Ascending aorta (tissue), 2 donors: ENCODE measurements at regions of chr18 and their contacts with region 1.

Region 1: DNA sequence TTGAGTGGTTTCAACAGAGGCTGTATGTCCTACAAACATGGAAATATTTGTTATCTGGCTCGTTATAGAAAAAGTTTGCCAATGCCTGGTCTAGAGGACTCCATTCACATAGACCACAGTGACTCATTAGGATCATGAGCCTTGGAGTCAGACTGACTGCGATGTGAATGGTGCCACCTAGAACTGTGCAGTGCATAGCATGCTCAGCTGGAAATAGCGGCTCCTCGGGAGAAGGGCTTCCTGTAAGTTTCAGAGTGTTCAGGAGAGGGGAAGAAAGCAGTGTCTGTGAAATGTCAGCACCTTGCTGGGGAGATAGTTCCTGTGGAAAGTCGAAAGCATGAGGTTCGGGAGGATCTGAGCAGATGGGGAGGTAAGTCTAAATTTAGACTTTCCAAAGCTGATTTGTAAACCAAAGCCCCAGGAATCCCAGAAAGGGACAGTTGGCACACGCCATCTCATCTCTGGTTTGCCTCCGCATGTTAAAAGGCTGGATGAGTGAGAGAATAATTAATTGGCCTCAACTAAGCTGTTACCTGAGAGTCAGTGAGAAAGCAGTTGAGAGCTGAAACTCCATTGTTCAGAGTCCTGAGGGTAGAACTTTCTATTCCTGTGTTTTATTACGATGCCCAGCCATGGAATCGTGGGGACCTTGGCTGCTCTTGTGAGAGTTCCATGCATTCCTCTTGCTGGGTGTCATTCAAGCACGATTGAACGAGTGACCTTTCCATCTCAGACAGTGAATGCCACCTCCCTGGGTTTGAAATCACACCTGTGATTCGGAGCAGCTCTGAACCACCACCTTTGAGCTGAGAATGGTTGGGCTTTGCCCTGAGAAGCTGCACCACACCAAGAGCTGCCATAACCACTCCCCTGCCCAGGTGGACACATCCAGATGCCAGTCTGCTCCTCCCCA is 99.5 kb downstream of the MAPK4 start:
- DNase-seq: no peak
- H3K4me3 ChIP-seq: no peak overlapping the region
- H3K27ac ChIP-seq: peak overlapping the region in 1 of 2 donors; percentile 21
- H3K4me1 ChIP-seq: peaks cover 8 to 11% of the 10 kb centered on the region in 2 donors
- H3K27me3 ChIP-seq: no peaks in the 10 kb centered on the region
- CTCF ChIP-seq: peak in 2 of 3 experiments; percentile 22 to 38

Region 2: GRCh38 chr18:50287441-50288347 is 371.7 kb before region 1 on chr18 and contains the start of gene CXXC1:
- intact Hi-C with region 1: loop called (anchors 10 kb)
- DNase-seq: peak; percentile 94 to 99
- H3K4me3 ChIP-seq: peak within 1 kb of the TSS; percentile 68 to 80
- H3K27ac ChIP-seq: peak within 1 kb of the TSS; percentile 83 to 88
- H3K4me1 ChIP-seq: no peaks in the 10 kb centered on the region
- H3K27me3 ChIP-seq: no peaks in the 10 kb centered on the region
- CTCF ChIP-seq: peak; percentile 35 to 69 (median 46)
- total RNA-seq, gene CXXC1: 171 TPM

Region 3: GRCh38 chr18:50559752-50560680 is 99.3 kb before region 1 on chr18 and contains the start of gene MAPK4:
- intact Hi-C with region 1: loop called (anchors 2 kb)
- DNase-seq: peak in 1 of 2 donors; percentile 70
- H3K4me3 ChIP-seq: peak within 1 kb of the TSS; percentile 77 to 82
- H3K27ac ChIP-seq: peak within 1 kb of the TSS; percentile 81 to 86
- H3K4me1 ChIP-seq: peaks cover 0 to 12% of the 10 kb centered on the region in 2 donors
- H3K27me3 ChIP-seq: no peaks in the 10 kb centered on the region
- CTCF ChIP-seq: no peak
- total RNA-seq, gene MAPK4: 1.2 TPM

Region 4: GRCh38 chr18:50619861-50620275 is 39.5 kb before region 1 on chr18:
- intact Hi-C with region 1: loop called (anchors 5 kb)
- DNase-seq: peak in 1 of 2 donors; percentile 80
- H3K4me3 ChIP-seq: no peak overlapping the region
- H3K27ac ChIP-seq: peak overlapping the region; percentile 43 to 72
- H3K4me1 ChIP-seq: peaks cover 0 to 17% of the 10 kb centered on the region in 2 donors
- H3K27me3 ChIP-seq: no peaks in the 10 kb centered on the region
- CTCF ChIP-seq: no peak

Region 5: GRCh38 chr18:50757358-50757757 is 98.0 kb after region 1 on chr18:
- intact Hi-C with region 1: loop called (anchors 5 kb)
- DNase-seq: peak in 1 of 2 donors; percentile 84
- H3K4me3 ChIP-seq: no peak overlapping the region
- H3K27ac ChIP-seq: peak overlapping the region in 1 of 2 donors; percentile 70
- H3K4me1 ChIP-seq: no peaks in the 10 kb centered on the region
- H3K27me3 ChIP-seq: no peaks in the 10 kb centered on the region
- CTCF ChIP-seq: no peak